ENCODE measurements at regions of chrX and their contacts with region 1.

Region 1: DNA sequence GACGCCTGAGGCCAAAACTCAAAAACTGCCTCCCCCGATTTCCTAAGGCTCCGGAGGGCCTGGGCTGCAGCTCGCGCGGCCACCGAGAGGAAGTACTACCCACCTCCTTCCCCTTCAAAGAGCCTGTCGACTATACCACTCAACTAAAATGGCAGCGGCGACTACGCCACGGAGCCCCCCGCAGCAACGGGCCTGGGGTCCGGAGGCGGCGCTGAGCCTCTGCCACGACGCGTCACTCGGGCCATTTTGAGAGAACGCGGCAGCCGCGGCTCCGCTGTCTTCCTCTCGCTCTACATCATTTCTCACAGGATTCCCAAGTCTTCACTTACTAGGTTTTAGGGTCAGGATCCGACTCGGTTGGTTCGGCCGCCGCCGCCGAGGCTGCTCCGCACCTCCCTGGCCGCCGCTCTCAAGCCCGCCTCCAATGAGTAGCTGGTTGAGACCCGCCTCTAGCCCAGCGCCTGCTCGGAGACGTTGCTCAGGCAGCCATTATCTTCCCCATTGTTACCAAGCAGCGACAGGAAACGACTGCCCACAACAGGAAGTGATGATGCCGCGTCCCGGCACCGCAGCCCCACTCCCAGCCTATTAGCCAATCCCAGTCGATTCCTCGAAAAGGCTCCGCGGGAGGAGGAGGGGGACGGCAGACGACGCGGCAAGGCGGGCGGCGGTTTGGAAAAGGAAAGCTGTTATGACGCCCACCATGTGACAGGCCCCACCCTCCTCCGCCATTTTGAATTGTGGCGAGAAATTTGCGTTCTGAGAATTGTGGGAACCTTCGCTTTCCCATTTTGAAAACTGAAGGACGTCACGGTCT is at the start of gene RLIM:
- DNase-seq: peak; percentile 83 to 95
- ATAC-seq: peak; percentile 83 to 94 (median 90)
- H3K4me3 ChIP-seq: peak within 1 kb of the TSS; percentile 92
- H3K4me3 Mint-ChIP-seq: peak within 1 kb of the TSS; percentile 99
- H3K27ac ChIP-seq: peak within 1 kb of the TSS; percentile 100
- H3K27ac Mint-ChIP-seq: peak within 1 kb of the TSS; percentile 96 to 100
- H3K4me1 ChIP-seq: peaks cover 5% of the 10 kb centered on the region
- H3K4me1 Mint-ChIP-seq: peaks cover 17 to 20% of the 10 kb centered on the region in 2 donors
- H3K27me3 ChIP-seq: no peaks in the 10 kb centered on the region
- H3K27me3 Mint-ChIP-seq: peaks cover 0 to 3% of the 10 kb centered on the region in 2 donors
- CTCF ChIP-seq: no peak
- total RNA-seq, gene RLIM: 43.2 to 49.5 (median 47.9) TPM

Region 2: GRCh38 chrX:74291964-74292807 is 322.1 kb before region 1 on chrX:
- intact Hi-C with region 1: loop called (anchors 5 kb)
- DNase-seq: peak; percentile 65 to 93
- ATAC-seq: peak; percentile 82 to 95 (median 89)
- H3K4me3 ChIP-seq: peak overlapping the region; percentile 90
- H3K4me3 Mint-ChIP-seq: peak overlapping the region; percentile 96
- H3K27ac ChIP-seq: peak overlapping the region; percentile 84
- H3K27ac Mint-ChIP-seq: peak overlapping the region; percentile 86 to 97
- H3K4me1 ChIP-seq: peaks cover 13% of the 10 kb centered on the region
- H3K4me1 Mint-ChIP-seq: peaks cover 27 to 29% of the 10 kb centered on the region in 2 donors
- H3K27me3 ChIP-seq: no peaks in the 10 kb centered on the region
- H3K27me3 Mint-ChIP-seq: no peaks in the 10 kb centered on the region
- CTCF ChIP-seq: no peak

Region 3: DNA sequence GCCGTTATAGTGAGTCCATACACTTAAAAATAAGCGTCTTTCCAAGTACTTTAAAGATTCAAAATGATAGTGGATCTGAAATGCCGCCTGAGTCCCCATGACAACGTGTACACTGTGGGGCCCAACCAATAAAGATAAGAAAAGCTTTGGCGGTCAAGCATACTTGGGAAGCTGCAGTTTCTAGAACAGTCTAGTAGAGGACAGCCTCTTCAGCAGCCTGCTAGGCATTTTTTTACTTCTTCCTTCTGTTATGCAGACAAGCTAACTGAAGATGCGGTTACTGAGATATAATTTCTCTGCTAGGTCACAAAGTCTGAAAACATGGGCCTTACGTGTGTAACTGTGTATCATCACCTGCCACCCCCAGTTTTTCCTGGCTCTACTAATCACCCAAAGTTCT is 659.2 kb after region 1 on chrX:
- intact Hi-C with region 1: loop called (anchors 10 kb)
- DNase-seq: no peak
- ATAC-seq: peak; percentile 30 to 43 (median 34)
- H3K4me3 ChIP-seq: peak overlapping the region; percentile 93
- H3K4me3 Mint-ChIP-seq: peak overlapping the region; percentile 94
- H3K27ac ChIP-seq: peak overlapping the region; percentile 94
- H3K27ac Mint-ChIP-seq: peak overlapping the region; percentile 93 to 99
- H3K4me1 ChIP-seq: no peaks in the 10 kb centered on the region
- H3K4me1 Mint-ChIP-seq: peaks cover 37 to 47% of the 10 kb centered on the region in 2 donors
- H3K27me3 ChIP-seq: no peaks in the 10 kb centered on the region
- H3K27me3 Mint-ChIP-seq: peaks cover 0 to 12% of the 10 kb centered on the region in 2 donors
- CTCF ChIP-seq: no peak